Psoas muscle (tissue), 8 donors: ENCODE measurements at regions of chr22 and their contacts with region 1.

Region 1: GRCh38 chr22:17712441-17712840 is 61.8 kb downstream of the BID start:
- DNase-seq: no peak
- ATAC-seq: no peak
- H3K4me3 ChIP-seq: no peak overlapping the region
- H3K27ac ChIP-seq: no peak overlapping the region
- H3K4me1 ChIP-seq: peaks cover 7% of the 10 kb centered on the region
- H3K27me3 ChIP-seq: no peaks in the 10 kb centered on the region
- CTCF ChIP-seq: no peak

Region 2: DNA sequence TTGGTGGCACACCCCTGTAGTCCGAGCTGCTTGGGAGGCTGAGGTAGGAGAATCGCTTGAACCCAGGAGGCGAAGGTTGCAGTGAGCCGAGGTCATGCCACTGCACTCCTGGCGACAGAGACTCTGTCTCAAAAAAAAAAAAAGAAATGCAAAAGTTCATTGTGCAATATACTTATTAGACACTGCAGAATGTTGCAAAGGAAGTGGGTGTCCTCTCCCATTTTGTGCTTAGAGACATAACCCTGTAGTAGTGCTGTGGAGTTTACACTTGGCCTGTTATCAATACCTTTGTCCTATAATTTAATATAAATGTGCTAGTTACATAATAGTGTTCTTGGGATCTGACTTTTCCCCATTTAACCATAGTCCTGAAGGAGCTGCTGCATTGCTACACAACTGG is 64.5 kb before region 1 on chr22:
- intact Hi-C with region 1: loop called in 1 of 2 experiments (anchors 10 kb)
- DNase-seq: no peak
- ATAC-seq: peak in 3 of 4 donors; percentile 17 to 22 (median 19)
- H3K4me3 ChIP-seq: no peak overlapping the region
- H3K27ac ChIP-seq: no peak overlapping the region
- H3K4me1 ChIP-seq: peaks cover 11% of the 10 kb centered on the region
- H3K27me3 ChIP-seq: no peaks in the 10 kb centered on the region
- CTCF ChIP-seq: no peak